Dendritic cell treated with granulocyte-macrophage colony-stimulating factor and Interleukin-4, amounts not matched to agents 40 ng/mL and 50 ng/mL, for 4 days (primary cell): ENCODE measurements at regions of chr7 and their contacts with region 1.

Region 1: DNA sequence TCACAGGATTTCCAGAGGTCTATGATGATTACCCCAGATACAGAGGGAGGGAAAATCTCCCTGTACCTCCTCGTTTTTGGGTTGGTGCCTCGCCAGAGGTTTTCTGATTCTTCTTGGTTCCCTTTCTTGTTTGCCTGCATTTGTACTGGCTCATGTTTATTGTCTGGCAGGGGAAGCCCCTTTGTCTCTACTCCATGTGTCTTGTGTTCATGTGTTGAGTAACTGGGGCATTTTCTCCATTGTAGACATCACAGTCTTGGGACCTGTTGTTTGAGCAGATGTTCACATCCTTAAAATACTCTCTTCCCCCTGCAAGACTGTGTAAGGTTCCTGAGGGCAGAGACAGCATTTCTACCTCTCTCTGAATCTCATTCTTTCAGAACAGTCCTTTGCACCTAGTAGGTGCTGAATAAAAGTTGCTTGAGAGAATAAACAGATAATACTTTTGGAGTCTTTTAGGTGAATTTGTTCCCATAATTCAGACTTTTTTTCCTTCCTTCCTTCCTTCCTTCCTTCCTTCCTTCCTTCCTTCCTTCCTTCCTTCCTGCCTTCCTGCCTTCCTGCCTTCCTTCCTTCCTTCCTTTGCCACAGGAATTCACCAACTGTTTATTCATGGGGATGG is 25.1 kb downstream of the CDK14 start:
- H3K4me3 Mint-ChIP-seq: no peak overlapping the region
- H3K27ac Mint-ChIP-seq: no peak overlapping the region
- H3K4me1 Mint-ChIP-seq: peaks cover 37% of the 10 kb centered on the region
- H3K27me3 Mint-ChIP-seq: no peaks in the 10 kb centered on the region

Region 2: DNA sequence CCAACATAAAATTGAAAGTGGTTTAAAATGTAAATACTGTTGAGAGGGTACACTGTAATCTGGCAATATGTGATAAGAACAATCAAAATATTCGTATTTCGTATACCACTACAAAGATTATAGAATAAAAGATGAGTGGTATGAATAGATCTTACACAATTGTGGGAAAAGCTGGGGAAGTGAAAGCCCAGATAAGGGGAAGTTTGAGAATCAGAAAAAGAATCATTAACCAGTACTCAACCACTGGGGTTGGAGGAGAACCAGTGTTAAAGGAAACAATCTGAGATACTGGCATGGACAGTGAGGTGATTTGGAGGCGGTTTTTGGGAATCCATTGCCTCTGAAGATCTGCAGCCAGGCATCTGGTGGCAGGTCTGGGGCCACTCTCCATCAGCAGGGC is 84.8 kb before region 1 on chr7:
- intact Hi-C with region 1: no loop called
- H3K4me3 Mint-ChIP-seq: no peak overlapping the region
- H3K27ac Mint-ChIP-seq: peak overlapping the region; percentile 58
- H3K4me1 Mint-ChIP-seq: peaks cover 45% of the 10 kb centered on the region
- H3K27me3 Mint-ChIP-seq: peaks cover 41% of the 10 kb centered on the region

Region 3: GRCh38 chr7:90586091-90586490 is 35.1 kb before region 1 on chr7:
- intact Hi-C with region 1: loop called (anchors 5 kb)
- H3K4me3 Mint-ChIP-seq: no peak overlapping the region
- H3K27ac Mint-ChIP-seq: no peak overlapping the region
- H3K4me1 Mint-ChIP-seq: peaks cover 16% of the 10 kb centered on the region
- H3K27me3 Mint-ChIP-seq: peaks cover 2% of the 10 kb centered on the region

Region 4: GRCh38 chr7:90661290-90662151 is 40.3 kb after region 1 on chr7:
- intact Hi-C with region 1: no loop called
- H3K4me3 Mint-ChIP-seq: no peak overlapping the region
- H3K27ac Mint-ChIP-seq: no peak overlapping the region
- H3K4me1 Mint-ChIP-seq: no peaks in the 10 kb centered on the region
- H3K27me3 Mint-ChIP-seq: no peaks in the 10 kb centered on the region

Region 5: DNA sequence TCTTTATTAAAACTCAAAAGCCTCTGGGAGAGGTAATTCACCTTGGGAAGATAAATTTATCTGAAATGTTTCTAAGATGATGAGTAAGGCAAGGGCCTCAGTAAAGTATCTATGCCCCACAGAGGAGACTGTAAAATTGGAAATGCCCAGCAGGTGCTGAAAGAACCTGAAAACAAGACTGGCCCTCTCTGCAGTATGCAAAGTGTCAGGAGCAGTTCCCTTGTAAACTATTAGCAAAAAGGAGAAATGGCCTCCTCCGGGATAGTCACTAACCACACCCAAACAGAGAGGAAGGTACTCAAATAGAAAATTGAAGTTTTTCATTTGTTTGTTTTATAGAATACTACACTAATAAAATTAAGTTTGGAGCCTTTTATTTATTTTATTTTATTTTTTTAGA is 724.2 kb after region 1 on chr7:
- intact Hi-C with region 1: no loop called
- H3K4me3 Mint-ChIP-seq: no peak overlapping the region
- H3K27ac Mint-ChIP-seq: peak overlapping the region; percentile 52
- H3K4me1 Mint-ChIP-seq: peaks cover 51% of the 10 kb centered on the region
- H3K27me3 Mint-ChIP-seq: no peaks in the 10 kb centered on the region